GM12878 (cell line): ENCODE measurements at regions of chr17 and their contacts with region 1.

Region 1: DNA sequence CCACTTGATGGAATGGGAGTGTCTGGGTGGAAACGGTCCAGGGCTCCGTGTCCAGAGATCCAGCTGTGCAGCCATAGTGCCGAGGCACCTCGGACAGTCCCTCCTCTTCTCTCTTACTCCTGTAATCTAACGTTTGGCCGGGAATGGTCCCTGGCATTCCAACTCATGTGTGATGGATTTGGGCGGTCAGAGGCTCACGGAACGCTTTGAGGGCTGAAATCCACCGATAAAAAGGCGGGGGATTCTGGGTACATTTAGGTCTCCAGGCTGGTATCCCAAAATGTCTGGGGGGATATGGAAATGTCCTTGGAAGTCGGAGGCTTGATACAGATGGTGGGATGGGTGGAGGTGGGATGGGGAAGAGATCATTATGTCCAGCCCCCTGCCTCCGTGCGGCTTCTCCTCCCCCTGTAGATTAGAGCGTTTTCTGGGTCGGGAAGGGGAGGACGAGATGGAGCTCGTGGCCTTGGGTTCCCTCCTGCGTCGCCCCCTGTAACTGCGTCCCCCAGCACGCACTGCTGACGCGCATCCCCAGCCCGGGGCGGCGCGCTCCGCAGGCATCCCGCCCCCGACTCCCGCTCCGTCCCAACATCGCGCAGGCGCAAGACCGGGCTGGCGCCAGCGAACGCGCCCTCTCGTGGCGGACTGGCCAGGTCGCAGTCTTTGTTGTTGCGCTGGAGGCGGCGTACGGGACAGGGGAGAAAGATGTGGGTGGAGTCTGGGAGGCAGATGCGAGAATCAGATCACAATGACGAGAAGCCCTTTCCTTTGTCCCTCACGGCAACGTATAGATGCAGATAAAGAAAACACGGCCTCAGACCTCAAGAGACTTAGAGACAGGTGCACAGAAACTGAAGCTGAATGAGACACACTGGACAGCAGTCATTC is 4.5 kb upstream of the SGCA start:
- DNase-seq: peak; percentile 80
- ATAC-seq: peak; percentile 96
- H3K4me3 ChIP-seq: peak overlapping the region; percentile 53
- H3K27ac ChIP-seq: peak overlapping the region; percentile 32; the same call in 1 of the 2 replicates
- H3K4me1 ChIP-seq: peaks cover 26% of the 10 kb centered on the region
- H3K27me3 ChIP-seq: no peaks in the 10 kb centered on the region
- CTCF ChIP-seq: peak; percentile 93 to 98 (median 97)
- EP300 ChIP-seq: no peak
- POLR2A ChIP-seq: peak; percentile 83
- RAD21 ChIP-seq: peak; percentile 71

Region 2: DNA sequence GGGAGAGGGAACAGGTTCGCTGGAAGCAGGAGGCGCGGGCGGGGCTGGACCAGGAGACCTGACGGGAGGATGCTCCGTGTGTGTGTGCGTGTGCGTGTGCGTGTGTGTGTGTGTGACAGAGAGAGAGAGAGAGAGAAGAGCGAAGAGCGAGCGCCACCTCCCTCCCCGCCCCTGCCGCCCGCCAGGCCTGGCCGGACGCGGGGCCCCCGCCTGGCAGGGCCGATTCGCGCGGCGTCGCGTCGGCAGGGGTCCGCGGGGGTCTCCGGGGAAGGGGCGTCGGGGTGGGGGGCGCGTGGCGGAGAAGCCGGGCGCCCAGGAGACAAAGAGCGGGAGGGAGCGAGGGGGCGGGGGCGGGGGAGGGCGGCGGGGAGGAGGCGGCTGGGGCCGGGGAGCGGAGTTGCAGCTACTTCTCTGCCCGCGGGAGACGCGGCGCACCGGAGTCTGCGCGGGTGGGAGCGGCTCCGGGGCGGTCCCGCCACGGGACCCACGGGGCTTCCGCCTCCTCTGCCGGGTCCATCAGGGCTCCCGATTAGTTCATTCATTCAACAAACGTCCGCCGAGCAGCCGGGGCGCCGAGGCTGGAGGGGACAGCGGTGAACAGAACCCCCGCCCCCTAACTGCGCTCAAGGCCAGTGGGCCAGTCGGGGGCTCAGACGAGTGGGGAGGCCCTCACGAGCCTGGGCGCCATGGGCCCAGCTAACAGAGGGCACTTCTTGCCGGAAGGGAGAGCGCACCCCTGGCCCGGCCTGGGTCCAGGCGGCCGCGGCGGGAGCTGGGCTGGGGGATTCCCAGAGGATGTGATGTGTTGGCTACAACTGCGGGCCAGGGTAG is 31.3 kb before region 1 on chr17 and contains the start of gene SAMD14:
- CTCF ChIA-PET with region 1: interaction called, 18 read pairs
- POLR2A ChIA-PET with region 1: interaction called, 5 read pairs
- RAD21 ChIA-PET with region 1: interaction called, 3 read pairs
- SMC1A ChIA-PET with region 1: interaction called, 6 read pairs
- in situ Hi-C with region 1: no loop called
- intact Hi-C with region 1: no loop called
- DNase-seq: no peak
- ATAC-seq: peak; percentile 82
- H3K4me3 ChIP-seq: peak within 1 kb of the TSS; percentile 62; the same call in 1 of the 2 replicates
- H3K27ac ChIP-seq: no peak within 1 kb of the TSS
- H3K4me1 ChIP-seq: peaks cover 6% of the 10 kb centered on the region; the same call in 1 of the 2 replicates
- H3K27me3 ChIP-seq: peaks cover 4 to 10% of the 10 kb centered on the region in 2 experiments
- CTCF ChIP-seq: no peak
- EP300 ChIP-seq: no peak
- POLR2A ChIP-seq: no peak
- RAD21 ChIP-seq: no peak
- polyA plus RNA-seq, gene SAMD14: not detected

Region 3: GRCh38 chr17:50177983-50178834 is 16.9 kb after region 1 on chr17:
- CTCF ChIA-PET with region 1: interaction called, 18 read pairs
- POLR2A ChIA-PET with region 1: no interaction called
- RAD21 ChIA-PET with region 1: interaction called, 3 read pairs
- SMC1A ChIA-PET with region 1: interaction called, 5 read pairs
- in situ Hi-C with region 1: no loop called
- intact Hi-C with region 1: no loop called
- DNase-seq: no peak
- ATAC-seq: peak; percentile 96
- H3K4me3 ChIP-seq: no peak overlapping the region
- H3K27ac ChIP-seq: no peak overlapping the region
- H3K4me1 ChIP-seq: peaks cover 4% of the 10 kb centered on the region
- H3K27me3 ChIP-seq: no peaks in the 10 kb centered on the region
- CTCF ChIP-seq: peak; percentile 61 to 69 (median 65)
- EP300 ChIP-seq: no peak
- POLR2A ChIP-seq: no peak
- RAD21 ChIP-seq: 0 out of 2 replicates have a peak, but pooled peaks have one; percentile 38

Region 4: GRCh38 chr17:50238601-50239280 is 77.5 kb after region 1 on chr17:
- CTCF ChIA-PET with region 1: no interaction called
- POLR2A ChIA-PET with region 1: no interaction called
- RAD21 ChIA-PET with region 1: no interaction called
- SMC1A ChIA-PET with region 1: no interaction called
- in situ Hi-C with region 1: no loop called
- intact Hi-C with region 1: no loop called
- DNase-seq: no peak
- ATAC-seq: no peak
- H3K4me3 ChIP-seq: no peak overlapping the region
- H3K27ac ChIP-seq: no peak overlapping the region
- H3K4me1 ChIP-seq: no peaks in the 10 kb centered on the region
- H3K27me3 ChIP-seq: no peaks in the 10 kb centered on the region
- CTCF ChIP-seq: no peak
- EP300 ChIP-seq: no peak
- POLR2A ChIP-seq: no peak
- RAD21 ChIP-seq: no peak

Region 5: DNA sequence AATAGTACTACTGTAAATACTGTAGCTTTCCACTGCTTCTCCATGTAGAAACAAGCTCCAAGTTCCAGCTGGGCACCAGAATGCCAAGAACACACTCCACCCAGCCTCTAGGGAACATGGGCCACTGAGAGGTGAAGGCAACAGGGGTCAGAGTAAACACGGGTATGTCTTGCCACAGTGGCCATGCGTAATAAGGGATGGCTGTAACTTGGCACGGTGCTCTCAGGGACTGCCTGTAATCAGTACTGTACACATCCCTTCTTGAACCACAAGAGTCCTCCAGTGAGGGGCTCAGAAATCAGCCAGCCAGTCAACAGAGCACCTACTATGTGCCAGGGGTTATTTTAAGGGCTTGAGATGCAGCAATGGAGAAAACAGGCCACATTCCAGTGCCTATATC is 225.2 kb after region 1 on chr17:
- CTCF ChIA-PET with region 1: no interaction called
- POLR2A ChIA-PET with region 1: no interaction called
- RAD21 ChIA-PET with region 1: no interaction called
- SMC1A ChIA-PET with region 1: no interaction called
- in situ Hi-C with region 1: no loop called
- intact Hi-C with region 1: no loop called
- DNase-seq: no peak
- ATAC-seq: no peak
- H3K4me3 ChIP-seq: no peak overlapping the region
- H3K27ac ChIP-seq: no peak overlapping the region
- H3K4me1 ChIP-seq: peaks cover 3% of the 10 kb centered on the region; the same call in 1 of the 2 replicates
- H3K27me3 ChIP-seq: no peaks in the 10 kb centered on the region
- CTCF ChIP-seq: no peak
- EP300 ChIP-seq: no peak
- POLR2A ChIP-seq: no peak
- RAD21 ChIP-seq: no peak